ENCODE measurements at regions of chr3 and their contacts with region 1.

Region 1: GRCh38 chr3:155870133-155870944 is at the start of gene GMPS:
- DNase-seq: peak; percentile 81 to 98 (median 95)

Region 2: GRCh38 chr3:154323891-154324738 is 1546.2 kb before region 1 on chr3 and contains the start of gene DHX36:
- intact Hi-C with region 1: loop called (anchors 10 kb)
- DNase-seq: peak; percentile 85 to 97 (median 92)

Region 3: DNA sequence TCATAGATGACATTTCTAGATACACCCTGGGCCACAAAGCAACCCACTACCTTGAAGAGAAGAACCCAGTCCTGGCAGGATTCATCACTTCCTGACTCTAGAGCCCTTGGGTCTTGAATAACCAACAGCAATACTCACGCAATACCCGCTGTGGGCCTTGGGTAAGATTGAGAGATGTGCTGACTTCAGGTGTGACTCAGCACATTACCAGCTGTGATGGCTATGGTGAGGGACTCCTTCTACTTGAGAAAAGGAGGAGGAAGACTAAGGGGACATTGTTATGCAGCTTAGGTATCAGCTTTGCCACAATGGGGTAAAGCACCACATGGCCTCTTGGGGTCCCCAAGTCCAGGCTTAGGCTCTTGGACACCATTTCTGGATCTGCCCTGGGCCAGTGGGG is 79.1 kb before region 1 on chr3:
- intact Hi-C with region 1: no loop called
- DNase-seq: no peak

Region 4: GRCh38 chr3:156090126-156090525 is 219.8 kb after region 1 on chr3:
- intact Hi-C with region 1: no loop called
- DNase-seq: no peak

Measured in head of caudate nucleus (tissue), 42 donors.